Naive thymus-derived CD4-positive, alpha-beta T cell (primary cell): ENCODE measurements at regions of chr21 and their contacts with region 1.

Region 1: DNA sequence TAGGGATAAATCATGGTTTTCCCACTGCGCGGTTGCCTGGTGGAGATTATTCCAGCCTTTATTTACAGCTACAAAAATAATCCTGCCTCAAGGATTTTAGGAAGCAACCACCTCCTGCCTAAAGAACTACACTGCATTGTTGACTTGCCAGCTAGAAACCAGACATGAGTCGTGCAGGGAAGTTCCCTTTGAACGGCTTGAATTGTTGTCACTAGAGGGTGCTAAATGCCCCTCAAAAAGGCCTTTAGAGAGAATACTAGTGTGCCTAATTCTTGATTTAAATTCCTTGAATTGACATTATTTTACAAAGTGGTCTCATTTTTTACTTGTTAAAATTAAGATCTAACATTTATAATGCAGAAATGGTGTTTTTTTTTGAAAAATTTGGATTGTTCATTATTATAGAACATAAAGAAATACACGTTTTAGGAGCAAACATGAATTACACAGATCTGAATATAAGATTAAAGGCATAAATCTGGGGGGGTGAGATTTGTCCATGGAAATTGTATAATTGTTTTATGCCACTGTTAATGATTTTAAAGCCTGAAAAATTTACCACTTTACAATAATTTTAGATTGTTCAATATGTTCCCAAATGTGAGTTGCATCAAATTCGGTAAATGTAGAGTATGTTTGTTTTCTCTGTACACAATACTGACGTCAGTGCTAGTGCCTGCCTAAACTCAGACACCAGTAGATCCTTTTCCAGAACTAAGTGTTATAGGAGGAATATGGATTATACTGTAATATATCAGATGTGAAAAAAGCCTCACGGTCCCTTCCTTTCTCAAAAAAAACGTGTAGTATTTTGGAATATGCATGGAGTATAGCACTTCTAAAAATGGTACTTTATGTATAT is 7.6 kb upstream of the ERG start:
- DNase-seq: peak in 5 of 9 donors; percentile 11 to 34 (median 13)
- ATAC-seq: peak; percentile 65
- H3K4me3 ChIP-seq: no peak overlapping the region
- H3K4me3 Mint-ChIP-seq: no peak overlapping the region
- H3K27ac ChIP-seq: no peak overlapping the region
- H3K27ac Mint-ChIP-seq: no peak overlapping the region
- H3K4me1 ChIP-seq: no peaks in the 10 kb centered on the region
- H3K4me1 Mint-ChIP-seq: peaks cover 9 to 21% (median 11%) of the 10 kb centered on the region in 7 donors
- H3K27me3 ChIP-seq: no peaks in the 10 kb centered on the region
- H3K27me3 Mint-ChIP-seq: peaks cover 21 to 52% (median 50%) of the 10 kb centered on the region in 5 donors

Region 2: DNA sequence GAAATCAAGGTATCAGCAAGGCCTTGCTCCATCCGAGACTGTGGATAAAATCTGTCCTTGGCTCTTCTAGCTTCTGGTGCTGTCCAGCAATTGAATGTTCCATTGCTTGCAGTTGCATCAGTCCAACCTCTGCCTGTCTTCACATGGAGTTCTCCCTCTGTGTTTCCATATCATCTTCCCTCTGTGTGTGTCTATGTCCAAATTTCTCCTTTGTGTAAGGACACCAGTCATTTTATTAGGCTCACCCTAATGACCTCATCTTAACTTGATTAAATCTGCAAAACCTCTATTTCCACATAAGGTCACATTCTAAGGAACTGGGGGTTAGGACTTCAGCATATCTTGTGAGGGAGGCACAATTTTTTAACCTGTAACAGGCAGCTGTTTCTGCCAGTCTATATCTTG is 91.8 kb before region 1 on chr21:
- CTCF ChIA-PET with region 1: no interaction called
- POLR2A ChIA-PET with region 1: no interaction called
- intact Hi-C with region 1: no loop called
- DNase-seq: no peak
- ATAC-seq: no peak
- H3K4me3 ChIP-seq: no peak overlapping the region
- H3K4me3 Mint-ChIP-seq: no peak overlapping the region
- H3K27ac ChIP-seq: no peak overlapping the region
- H3K27ac Mint-ChIP-seq: no peak overlapping the region
- H3K4me1 ChIP-seq: no peaks in the 10 kb centered on the region
- H3K4me1 Mint-ChIP-seq: peaks cover 0 to 2% (median 0%) of the 10 kb centered on the region in 7 donors
- H3K27me3 ChIP-seq: no peaks in the 10 kb centered on the region
- H3K27me3 Mint-ChIP-seq: peaks cover 15 to 24% (median 19%) of the 10 kb centered on the region in 5 donors

Region 3: GRCh38 chr21:39137248-39138178 is 631.6 kb after region 1 on chr21:
- CTCF ChIA-PET with region 1: no interaction called
- POLR2A ChIA-PET with region 1: no interaction called
- intact Hi-C with region 1: loop called in 1 of 2 experiments (anchors 1 kb)
- DNase-seq: no peak
- ATAC-seq: no peak
- H3K4me3 ChIP-seq: no peak overlapping the region
- H3K4me3 Mint-ChIP-seq: no peak overlapping the region
- H3K27ac ChIP-seq: no peak overlapping the region
- H3K27ac Mint-ChIP-seq: no peak overlapping the region
- H3K4me1 ChIP-seq: no peaks in the 10 kb centered on the region
- H3K4me1 Mint-ChIP-seq: no peaks in the 10 kb centered on the region
- H3K27me3 ChIP-seq: no peaks in the 10 kb centered on the region
- H3K27me3 Mint-ChIP-seq: peaks cover 0 to 4% (median 0%) of the 10 kb centered on the region in 5 donors

Region 4: GRCh38 chr21:39175154-39175553 is 669.3 kb after region 1 on chr21:
- CTCF ChIA-PET with region 1: no interaction called
- POLR2A ChIA-PET with region 1: no interaction called
- intact Hi-C with region 1: loop called in 1 of 2 experiments (anchors 1 kb)
- DNase-seq: peak in 5 of 9 donors; percentile 9 to 29 (median 13)
- ATAC-seq: no peak
- H3K4me3 ChIP-seq: no peak overlapping the region
- H3K4me3 Mint-ChIP-seq: no peak overlapping the region
- H3K27ac ChIP-seq: no peak overlapping the region
- H3K27ac Mint-ChIP-seq: no peak overlapping the region
- H3K4me1 ChIP-seq: no peaks in the 10 kb centered on the region
- H3K4me1 Mint-ChIP-seq: peaks cover 0 to 18% (median 11%) of the 10 kb centered on the region in 7 donors
- H3K27me3 ChIP-seq: no peaks in the 10 kb centered on the region
- H3K27me3 Mint-ChIP-seq: no peaks in the 10 kb centered on the region

Region 5: GRCh38 chr21:39445321-39446269 is 939.7 kb after region 1 on chr21 and contains the start of gene LCA5L:
- CTCF ChIA-PET with region 1: no interaction called
- POLR2A ChIA-PET with region 1: no interaction called
- intact Hi-C with region 1: loop called in 1 of 2 experiments (anchors 5 kb)
- DNase-seq: peak; percentile 80 to 96 (median 90)
- ATAC-seq: peak; percentile 93
- H3K4me3 ChIP-seq: peak within 1 kb of the TSS; percentile 83
- H3K4me3 Mint-ChIP-seq: peak within 1 kb of the TSS; percentile 91 to 99 (median 94)
- H3K27ac ChIP-seq: peak within 1 kb of the TSS; percentile 76
- H3K27ac Mint-ChIP-seq: peak within 1 kb of the TSS; percentile 86 to 98 (median 94)
- H3K4me1 ChIP-seq: peaks cover 11 to 13% of the 10 kb centered on the region in 2 donors
- H3K4me1 Mint-ChIP-seq: peaks cover 8 to 26% (median 14%) of the 10 kb centered on the region in 7 donors
- H3K27me3 ChIP-seq: peaks cover 0 to 2% of the 10 kb centered on the region in 2 donors
- H3K27me3 Mint-ChIP-seq: peaks cover 0 to 44% (median 14%) of the 10 kb centered on the region in 5 donors
- total RNA-seq, gene LCA5L: not detected